IMR-90 (cell line): ENCODE measurements at regions of chr11 and their contacts with region 1.

Region 1: GRCh38 chr11:72722050-72722748 is 30.0 kb downstream of the ARAP1 start:
- DNase-seq: peak; percentile 89
- ATAC-seq: peak; percentile 92
- H3K4me3 ChIP-seq: peak overlapping the region; percentile 41
- H3K27ac ChIP-seq: peak overlapping the region; percentile 93
- H3K4me1 ChIP-seq: peaks cover 27% of the 10 kb centered on the region
- H3K27me3 ChIP-seq: no peaks in the 10 kb centered on the region
- CTCF ChIP-seq: no peak
- POLR2A ChIP-seq: peak; percentile 54; the same call in 1 of the 2 replicates
- RAD21 ChIP-seq: no peak

Region 2: GRCh38 chr11:72793425-72794367 is 71.5 kb after region 1 on chr11 and contains the start of gene STARD10:
- CTCF ChIA-PET with region 1: interaction called, 15 read pairs
- POLR2A ChIA-PET with region 1: interaction called, 6 read pairs
- dilution Hi-C with region 1: no loop called
- in situ Hi-C with region 1: loop called (anchors 5 kb)
- intact Hi-C with region 1: loop called (anchors 1 kb)
- DNase-seq: peak; percentile 94
- ATAC-seq: peak; percentile 97
- H3K4me3 ChIP-seq: peak within 1 kb of the TSS; percentile 68
- H3K27ac ChIP-seq: peak within 1 kb of the TSS; percentile 82
- H3K4me1 ChIP-seq: peaks cover 15% of the 10 kb centered on the region
- H3K27me3 ChIP-seq: no peaks in the 10 kb centered on the region
- CTCF ChIP-seq: peak; percentile 88
- POLR2A ChIP-seq: no peak; the same call in 1 of the 2 replicates
- RAD21 ChIP-seq: peak; percentile 61; the same call in 1 of the 2 replicates
- total RNA-seq, gene STARD10: 22.2 and 23.8 TPM in 2 replicates

Region 3: GRCh38 chr11:72814286-72815109 is 92.3 kb after region 1 on chr11 and contains the start of gene ATG16L2:
- CTCF ChIA-PET with region 1: interaction called, 3 read pairs
- POLR2A ChIA-PET with region 1: no interaction called
- dilution Hi-C with region 1: no loop called
- in situ Hi-C with region 1: no loop called
- intact Hi-C with region 1: loop called (anchors 1 kb)
- DNase-seq: peak; percentile 76
- ATAC-seq: peak; percentile 92
- H3K4me3 ChIP-seq: peak within 1 kb of the TSS; percentile 89
- H3K27ac ChIP-seq: peak within 1 kb of the TSS; percentile 99
- H3K4me1 ChIP-seq: peaks cover 22% of the 10 kb centered on the region
- H3K27me3 ChIP-seq: no peaks in the 10 kb centered on the region
- CTCF ChIP-seq: peak; percentile 34
- POLR2A ChIP-seq: peak; percentile 48
- RAD21 ChIP-seq: no peak; the same call in 1 of the 2 replicates
- total RNA-seq, gene ATG16L2: 1.3 and 1.4 TPM in 2 replicates

Region 4: DNA sequence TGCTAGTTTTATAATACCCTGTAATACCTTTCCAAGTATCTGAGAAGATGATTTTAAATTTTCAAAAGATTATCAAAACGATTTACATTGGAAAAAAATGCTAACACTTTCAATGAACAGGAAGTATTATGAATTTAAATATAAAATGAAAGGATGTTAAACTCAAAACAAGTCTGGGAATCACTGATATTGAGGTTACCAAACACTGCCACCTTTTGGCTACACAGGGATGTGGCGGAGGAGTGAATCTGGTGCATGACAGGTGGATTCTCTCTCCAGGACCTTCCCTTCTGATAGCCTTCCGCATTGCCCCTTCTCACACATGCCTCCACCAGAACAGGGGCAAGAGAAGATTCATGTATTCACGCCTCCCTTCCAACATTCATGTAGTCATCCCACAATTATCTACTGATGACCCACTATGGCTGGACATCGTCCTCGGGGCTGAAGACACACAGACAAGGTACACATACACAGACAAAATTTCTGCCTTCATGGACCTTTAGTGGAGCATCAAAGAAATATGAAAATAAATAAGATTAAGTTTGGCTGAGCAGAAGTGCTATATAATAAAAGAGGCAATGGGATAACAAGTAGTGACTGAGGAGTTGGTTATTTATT is 126.8 kb after region 1 on chr11:
- CTCF ChIA-PET with region 1: no interaction called
- POLR2A ChIA-PET with region 1: no interaction called
- dilution Hi-C with region 1: no loop called
- in situ Hi-C with region 1: no loop called
- intact Hi-C with region 1: loop called (anchors 1 kb)
- DNase-seq: peak; percentile 60
- ATAC-seq: peak; percentile 58; the same call in 1 of the 2 replicates
- H3K4me3 ChIP-seq: no peak overlapping the region
- H3K27ac ChIP-seq: no peak overlapping the region
- H3K4me1 ChIP-seq: peaks cover 2% of the 10 kb centered on the region
- H3K27me3 ChIP-seq: no peaks in the 10 kb centered on the region
- CTCF ChIP-seq: peak; percentile 62
- POLR2A ChIP-seq: no peak
- RAD21 ChIP-seq: peak; percentile 64